H1 (cell line): ENCODE measurements at regions of chr9 and their contacts with region 1.

Region 1: DNA sequence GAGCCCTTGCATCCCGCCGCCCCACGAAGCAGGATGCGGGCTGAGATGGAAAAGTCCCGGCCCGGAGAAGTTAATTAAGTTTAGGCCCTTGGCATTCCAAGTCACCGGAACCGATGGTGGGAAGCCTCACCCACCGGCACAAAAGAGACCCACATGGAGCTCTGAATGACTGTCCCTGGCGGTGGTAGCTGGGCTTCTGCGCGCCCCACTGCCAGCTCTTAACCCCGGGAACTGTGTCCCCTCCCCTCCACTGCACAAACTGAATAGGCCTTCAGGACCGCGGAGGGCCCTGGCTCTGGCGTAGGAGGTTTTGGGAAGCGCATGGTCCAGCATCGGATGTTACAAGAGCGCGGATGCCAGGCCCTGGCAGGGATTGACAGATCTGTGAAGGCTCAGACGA is 291.1 kb upstream of the TUT7 start:
- DNase-seq: no peak
- H3K4me3 ChIP-seq: no peak overlapping the region
- H3K27ac ChIP-seq: no peak overlapping the region
- H3K4me1 ChIP-seq: peaks cover 0 to 4% (median 2%) of the 10 kb centered on the region in 4 experiments; a peak in 4 of 7 replicates
- H3K27me3 ChIP-seq: no peaks in the 10 kb centered on the region
- CTCF ChIP-seq: no peak
- EP300 ChIP-seq: no peak
- POLR2A ChIP-seq: no peak
- RAD21 ChIP-seq: no peak

Region 2: GRCh38 chr9:86614871-86615849 is 30.1 kb before region 1 on chr9:
- CTCF ChIA-PET with region 1: no interaction called
- POLR2A ChIA-PET with region 1: no interaction called
- DNase-seq: peak in 1 of 2 experiments; percentile 58
- H3K4me3 ChIP-seq: no peak overlapping the region
- H3K27ac ChIP-seq: no peak overlapping the region
- H3K4me1 ChIP-seq: peaks cover 0 to 6% (median 2%) of the 10 kb centered on the region in 4 experiments; a peak in 4 of 7 replicates
- H3K27me3 ChIP-seq: peaks cover 0 to 3% (median 0%) of the 10 kb centered on the region in 4 experiments; a peak in 1 of 7 replicates
- CTCF ChIP-seq: peak in 2 of 3 experiments; percentile 52 to 67; a peak in 3 of 4 replicates
- EP300 ChIP-seq: no peak
- POLR2A ChIP-seq: no peak
- RAD21 ChIP-seq: peak; percentile 57 to 59

Region 3: DNA sequence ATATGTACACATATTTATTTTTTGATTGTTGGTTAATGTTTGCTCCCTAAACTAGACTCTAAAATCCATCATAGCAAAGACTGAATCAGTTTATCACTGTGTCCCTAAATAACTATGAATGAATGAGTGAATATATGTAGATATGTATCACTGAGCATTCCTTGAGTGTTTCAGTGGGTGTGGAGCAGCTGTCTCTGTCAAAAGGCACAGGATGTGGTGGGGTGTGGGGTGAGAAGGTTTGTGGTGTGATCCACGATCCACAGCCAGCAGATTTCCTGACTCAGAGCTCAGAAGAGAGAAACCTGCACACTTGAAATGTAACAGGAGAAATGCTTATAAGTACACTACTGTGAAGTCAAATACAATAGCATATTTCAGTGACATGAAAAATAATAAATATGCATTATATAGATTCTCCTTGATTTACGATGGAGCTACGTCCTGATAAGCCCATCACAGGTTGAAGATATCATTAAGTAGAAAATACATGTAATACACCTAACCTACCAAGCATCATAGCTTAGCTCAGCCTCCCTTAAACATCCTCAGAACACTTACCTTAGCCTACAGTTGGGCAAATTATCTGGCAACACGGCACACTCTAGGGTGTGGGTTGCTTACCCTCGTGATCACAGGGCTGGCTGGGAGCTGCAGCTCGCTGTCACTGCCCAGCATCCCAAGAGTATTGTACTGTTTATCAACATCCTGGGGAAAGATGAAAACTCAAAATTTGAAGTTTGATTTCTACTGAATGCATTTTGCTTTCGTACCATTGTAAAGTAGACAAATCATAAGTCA is 15.0 kb after region 1 on chr9:
- CTCF ChIA-PET with region 1: interaction called, 12 read pairs
- POLR2A ChIA-PET with region 1: no interaction called
- DNase-seq: no peak
- H3K4me3 ChIP-seq: no peak overlapping the region
- H3K27ac ChIP-seq: no peak overlapping the region
- H3K4me1 ChIP-seq: no peaks in the 10 kb centered on the region
- H3K27me3 ChIP-seq: no peaks in the 10 kb centered on the region
- CTCF ChIP-seq: no peak
- EP300 ChIP-seq: no peak
- POLR2A ChIP-seq: no peak
- RAD21 ChIP-seq: no peak